IMR-90 (cell line): ENCODE measurements at regions of chr18 and their contacts with region 1.

Region 1: DNA sequence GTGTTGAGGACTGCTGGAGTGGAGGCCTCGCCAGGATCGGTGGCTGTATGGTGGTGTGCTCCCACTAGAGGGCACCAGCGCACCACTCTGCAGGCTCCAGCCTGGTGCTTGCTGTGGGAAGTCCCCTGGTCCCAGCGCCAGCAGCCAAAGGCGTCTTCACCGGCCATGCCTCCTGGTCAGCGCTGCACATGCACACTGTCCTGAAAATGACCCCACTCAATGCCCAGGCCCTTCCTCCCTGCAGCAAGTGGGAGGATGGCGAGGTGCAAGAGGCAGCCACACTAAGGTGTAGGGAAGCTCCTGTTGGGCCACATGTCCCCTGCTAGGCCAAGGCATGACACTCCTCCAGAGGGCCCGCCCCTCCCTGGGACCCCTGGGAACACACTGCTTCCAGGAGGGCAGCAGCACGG is 136.5 kb downstream of the CTIF start:
- DNase-seq: peak; percentile 89
- ATAC-seq: peak; percentile 96
- H3K4me3 ChIP-seq: no peak overlapping the region
- H3K27ac ChIP-seq: no peak overlapping the region
- H3K4me1 ChIP-seq: peaks cover 23% of the 10 kb centered on the region
- H3K27me3 ChIP-seq: no peaks in the 10 kb centered on the region
- CTCF ChIP-seq: peak; percentile 97
- POLR2A ChIP-seq: no peak
- RAD21 ChIP-seq: peak; percentile 95

Region 2: DNA sequence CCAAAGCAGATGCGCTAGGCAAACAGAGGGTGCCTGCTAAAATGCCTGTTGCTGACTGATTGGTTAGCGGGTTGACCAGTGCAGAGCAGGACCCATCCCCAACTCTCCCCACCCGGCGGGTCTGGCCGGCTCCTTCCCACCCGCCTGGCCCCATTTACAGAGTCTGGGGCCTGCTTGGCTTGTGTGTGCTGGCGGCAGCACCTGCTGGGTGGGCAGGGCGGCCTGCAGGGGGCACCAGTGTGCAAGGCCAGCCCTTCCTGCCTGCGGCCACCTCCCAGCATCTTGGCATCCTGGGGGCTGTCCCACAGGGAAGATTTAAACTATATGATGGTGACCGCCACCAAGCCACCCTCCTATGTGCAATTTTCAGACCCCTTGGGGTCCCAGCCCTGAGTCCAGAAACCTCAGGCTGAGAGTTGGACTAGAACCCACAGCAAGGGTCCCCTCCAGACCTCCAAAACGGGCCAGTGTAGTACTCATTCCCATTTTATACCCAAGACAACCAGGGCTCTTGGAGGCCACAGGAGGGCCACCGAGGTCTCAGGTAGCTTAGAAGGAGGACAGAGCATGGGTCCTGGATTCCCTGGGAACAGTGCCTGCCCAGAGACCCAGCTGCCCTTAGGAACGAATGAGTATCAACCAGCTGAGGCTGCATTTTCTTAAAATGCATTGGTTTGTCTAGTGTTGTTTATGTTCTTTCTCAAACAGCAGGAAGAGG is 101.8 kb after region 1 on chr18:
- CTCF ChIA-PET with region 1: no interaction called
- POLR2A ChIA-PET with region 1: no interaction called
- dilution Hi-C with region 1: no loop called
- in situ Hi-C with region 1: no loop called
- intact Hi-C with region 1: loop called (anchors 5 kb)
- DNase-seq: peak; percentile 20
- ATAC-seq: peak; percentile 50
- H3K4me3 ChIP-seq: no peak overlapping the region
- H3K27ac ChIP-seq: no peak overlapping the region
- H3K4me1 ChIP-seq: peaks cover 39% of the 10 kb centered on the region
- H3K27me3 ChIP-seq: no peaks in the 10 kb centered on the region
- CTCF ChIP-seq: peak; percentile 72
- POLR2A ChIP-seq: no peak
- RAD21 ChIP-seq: peak; percentile 78

Region 3: DNA sequence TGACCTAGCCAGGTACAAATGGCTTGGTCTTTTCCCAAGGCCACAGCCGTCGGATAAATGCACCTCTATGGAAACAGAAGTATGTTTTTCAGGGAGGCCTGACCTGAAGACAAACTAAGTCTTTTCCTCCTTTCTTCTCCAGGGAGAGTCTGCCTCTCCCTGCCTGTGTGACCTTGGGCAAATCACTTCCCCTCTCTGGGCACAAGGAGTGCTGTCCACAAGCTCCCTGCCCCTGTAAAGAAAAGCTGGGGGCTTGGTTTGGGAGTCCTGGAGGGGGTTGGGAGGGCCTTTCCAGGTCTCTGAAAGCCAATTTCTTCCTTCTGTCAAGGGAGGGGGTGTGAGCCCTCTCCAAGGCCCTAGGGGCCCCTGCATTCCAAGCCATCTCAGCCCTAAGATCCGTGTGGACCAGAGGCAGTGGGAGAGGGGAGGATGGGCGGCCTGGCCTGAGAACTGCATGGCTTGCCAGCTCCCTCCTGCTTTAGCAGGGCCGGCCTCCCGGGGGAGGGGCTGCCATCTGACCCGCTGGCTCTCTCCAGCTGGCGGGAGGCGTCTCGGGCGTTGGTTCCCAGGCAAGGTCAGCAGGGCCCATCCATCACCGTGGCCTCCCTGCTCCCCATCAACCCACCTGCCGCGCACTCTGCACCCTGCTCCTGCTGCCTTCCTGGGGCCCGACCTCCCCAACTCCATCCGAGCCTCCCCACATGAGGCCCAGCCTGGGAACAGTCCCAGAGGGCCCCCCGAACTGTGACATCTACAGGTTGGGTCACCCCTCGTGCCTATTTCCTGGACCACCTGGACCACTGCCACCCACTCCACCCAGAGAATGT is 214.0 kb after region 1 on chr18:
- CTCF ChIA-PET with region 1: no interaction called
- POLR2A ChIA-PET with region 1: no interaction called
- dilution Hi-C with region 1: no loop called
- in situ Hi-C with region 1: no loop called
- intact Hi-C with region 1: no loop called
- DNase-seq: no peak
- ATAC-seq: peak; percentile 79
- H3K4me3 ChIP-seq: no peak overlapping the region
- H3K27ac ChIP-seq: no peak overlapping the region
- H3K4me1 ChIP-seq: peaks cover 8% of the 10 kb centered on the region
- H3K27me3 ChIP-seq: no peaks in the 10 kb centered on the region
- CTCF ChIP-seq: no peak
- POLR2A ChIP-seq: no peak
- RAD21 ChIP-seq: no peak

Region 4: DNA sequence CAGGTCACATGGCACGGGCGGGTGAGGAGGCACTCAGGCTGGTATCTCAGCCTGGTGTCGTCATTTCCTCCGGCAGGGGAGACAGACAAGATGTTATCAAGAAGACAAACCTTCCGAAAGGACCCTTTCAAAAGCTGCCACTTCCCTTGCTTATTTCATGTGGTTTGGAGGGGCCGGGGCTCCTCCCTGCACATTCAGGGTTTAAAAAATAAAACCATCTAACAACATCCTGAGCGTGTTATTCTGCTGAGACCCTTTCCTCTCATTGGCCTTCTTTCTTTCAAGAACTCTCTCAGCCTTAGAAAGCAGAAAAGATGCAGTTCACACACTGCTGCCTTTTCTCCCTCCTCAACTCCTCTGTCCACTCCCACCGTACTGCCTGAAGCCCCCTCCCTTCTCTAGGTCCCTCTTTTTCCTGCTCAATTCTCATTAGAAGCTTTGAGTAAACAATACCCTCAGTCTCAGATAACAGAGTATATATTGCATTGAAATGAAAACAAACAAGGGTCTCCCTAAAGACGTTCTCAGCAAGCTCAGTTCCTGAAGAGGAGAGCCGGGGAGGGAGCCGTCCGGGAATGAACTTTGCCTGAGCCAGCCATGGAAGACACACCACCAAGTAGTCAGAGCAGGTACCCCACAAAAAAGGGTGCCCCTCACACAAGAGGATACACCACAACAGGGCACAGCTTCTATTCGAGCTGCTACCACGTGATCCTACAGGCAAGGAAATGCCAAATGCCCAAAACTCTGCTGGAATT is 265.7 kb after region 1 on chr18:
- CTCF ChIA-PET with region 1: no interaction called
- POLR2A ChIA-PET with region 1: no interaction called
- dilution Hi-C with region 1: no loop called
- in situ Hi-C with region 1: loop called (anchors 5 kb)
- intact Hi-C with region 1: no loop called
- DNase-seq: peak; percentile 45
- ATAC-seq: peak; percentile 33
- H3K4me3 ChIP-seq: no peak overlapping the region
- H3K27ac ChIP-seq: peak overlapping the region; percentile 42
- H3K4me1 ChIP-seq: peaks cover 62% of the 10 kb centered on the region
- H3K27me3 ChIP-seq: no peaks in the 10 kb centered on the region
- CTCF ChIP-seq: no peak
- POLR2A ChIP-seq: no peak
- RAD21 ChIP-seq: peak; percentile 17; the same call in 1 of the 2 replicates

Region 5: DNA sequence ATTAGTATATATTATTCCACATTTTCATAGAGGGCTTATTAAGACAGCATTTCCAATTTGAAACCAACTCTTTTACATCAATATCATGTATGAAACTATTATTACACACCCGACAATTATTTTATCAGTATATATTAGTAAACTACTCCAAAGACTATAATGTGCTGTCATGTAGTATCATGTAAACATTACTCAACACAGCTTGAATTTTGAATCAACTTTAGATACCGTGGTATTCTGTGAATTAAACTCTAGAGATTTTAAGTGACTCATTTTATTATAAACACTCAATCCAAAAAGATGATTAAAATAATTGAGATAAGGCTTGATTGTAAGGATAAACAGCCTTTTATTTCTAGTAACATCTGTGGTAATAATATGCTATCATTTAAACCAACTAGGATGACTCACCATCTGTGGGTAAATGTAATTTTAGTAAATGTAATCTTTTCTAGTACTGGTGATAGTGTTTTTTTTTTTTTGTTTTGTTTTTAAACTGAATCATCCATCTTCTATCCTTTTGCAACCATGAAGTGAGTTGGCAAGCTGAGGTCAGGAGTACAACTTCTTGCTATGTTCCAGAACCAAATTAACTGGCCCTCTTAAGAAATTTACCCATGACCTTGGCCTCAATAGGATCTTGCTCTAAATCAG is 419.7 kb after region 1 on chr18:
- CTCF ChIA-PET with region 1: no interaction called
- POLR2A ChIA-PET with region 1: no interaction called
- dilution Hi-C with region 1: no loop called
- in situ Hi-C with region 1: no loop called
- intact Hi-C with region 1: loop called (anchors 2 kb)
- DNase-seq: peak; percentile 92
- ATAC-seq: peak; percentile 66
- H3K4me3 ChIP-seq: no peak overlapping the region
- H3K27ac ChIP-seq: no peak overlapping the region
- H3K4me1 ChIP-seq: peaks cover 6% of the 10 kb centered on the region
- H3K27me3 ChIP-seq: 0 out of 2 replicates have a peak, but pooled peaks cover 1% of the 10 kb centered on the region
- CTCF ChIP-seq: no peak
- POLR2A ChIP-seq: no peak
- RAD21 ChIP-seq: no peak

Region 6: DNA sequence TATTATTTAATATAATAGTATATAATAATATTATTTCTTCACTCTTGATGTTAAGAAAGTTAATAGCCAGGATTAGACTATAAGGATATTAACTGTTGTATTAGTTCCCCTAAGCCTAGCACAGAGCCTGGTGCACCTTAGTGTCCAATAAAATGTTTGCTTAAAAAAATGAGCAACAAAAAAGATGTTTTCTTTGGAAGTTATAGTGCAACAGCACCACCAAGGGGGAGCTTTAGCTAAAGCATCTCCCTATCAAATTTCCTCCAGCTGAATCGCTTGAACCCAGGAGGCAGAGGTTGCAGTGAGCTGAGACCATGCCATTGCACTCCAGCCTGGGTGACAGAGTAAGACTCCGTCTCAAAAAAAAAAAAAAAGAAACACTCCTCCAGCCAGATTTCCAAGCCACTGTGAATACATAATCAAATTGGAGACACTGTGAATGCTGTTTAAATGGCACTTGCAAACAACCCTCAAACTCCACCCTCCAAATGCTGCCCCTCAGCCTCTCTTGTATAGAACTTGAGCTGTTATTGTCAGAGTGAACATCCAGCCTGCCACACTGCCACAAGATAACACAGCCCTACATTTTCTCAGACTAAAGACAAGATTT is 563.2 kb after region 1 on chr18:
- CTCF ChIA-PET with region 1: no interaction called
- POLR2A ChIA-PET with region 1: no interaction called
- dilution Hi-C with region 1: no loop called
- in situ Hi-C with region 1: loop called (anchors 5 kb)
- intact Hi-C with region 1: loop called (anchors 1 kb)
- DNase-seq: peak; percentile 51
- ATAC-seq: peak; percentile 71
- H3K4me3 ChIP-seq: no peak overlapping the region
- H3K27ac ChIP-seq: no peak overlapping the region
- H3K4me1 ChIP-seq: peaks cover 2% of the 10 kb centered on the region; the same call in 1 of the 2 replicates
- H3K27me3 ChIP-seq: no peaks in the 10 kb centered on the region
- CTCF ChIP-seq: peak; percentile 72
- POLR2A ChIP-seq: no peak
- RAD21 ChIP-seq: peak; percentile 80